ENCODE measurements at regions of chr3 and their contacts with region 1.

Region 1: DNA sequence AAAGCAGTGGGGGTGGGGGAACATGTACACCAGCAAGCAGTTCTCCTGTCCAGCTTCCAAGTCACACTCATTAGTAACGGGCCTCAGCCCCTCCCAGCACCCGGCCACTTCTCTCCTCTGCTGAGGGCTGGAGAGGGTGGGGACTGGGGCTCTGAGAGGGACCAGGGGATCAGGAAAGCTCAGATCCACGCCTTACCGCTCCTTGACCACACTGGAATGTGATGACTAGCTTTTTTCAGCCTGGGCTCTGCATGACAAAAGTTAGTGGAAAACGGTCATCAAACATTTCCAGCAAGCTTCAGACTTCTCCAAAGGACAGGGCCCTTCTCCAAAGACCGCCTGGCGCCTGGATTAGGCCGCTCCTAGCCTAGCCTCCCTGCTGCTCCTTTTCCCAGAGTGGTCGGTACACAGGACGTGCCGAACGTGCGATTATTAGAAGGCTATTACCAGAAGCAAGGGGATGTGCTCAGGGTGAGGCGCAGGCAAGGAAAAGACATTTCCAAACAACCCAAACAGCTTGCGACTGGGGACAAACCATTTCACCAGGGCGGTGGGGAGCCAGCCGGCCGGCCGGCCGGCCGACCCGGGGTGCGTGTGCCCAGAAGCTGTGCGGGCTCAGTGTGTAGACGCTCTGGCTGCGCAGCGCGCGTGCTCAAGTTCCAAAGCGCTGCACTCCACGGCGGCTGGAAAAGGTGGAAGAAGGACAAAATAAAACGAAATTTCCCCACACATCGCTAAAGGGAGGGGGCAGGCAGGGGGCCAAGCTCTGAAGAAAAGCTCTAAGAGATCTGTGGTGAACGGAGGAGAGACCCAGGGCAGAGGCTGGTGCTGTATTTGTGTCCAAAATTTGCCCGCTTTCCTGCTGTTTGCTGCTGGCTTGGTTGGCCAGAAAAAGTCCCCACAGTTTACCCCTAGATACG is 51.0 kb upstream of the SSR3 start:
- DNase-seq: no peak
- ATAC-seq: peak; percentile 51
- H3K4me3 ChIP-seq: peak overlapping the region; percentile 17
- H3K4me3 Mint-ChIP-seq: peak overlapping the region; percentile 18 to 88 (median 68)
- H3K27ac ChIP-seq: no peak overlapping the region
- H3K27ac Mint-ChIP-seq: peak overlapping the region in 1 of 9 donors; percentile 74
- H3K4me1 ChIP-seq: peaks cover 0 to 5% of the 10 kb centered on the region in 2 donors
- H3K4me1 Mint-ChIP-seq: peaks cover 5 to 45% (median 10%) of the 10 kb centered on the region in 7 donors
- H3K27me3 ChIP-seq: no peaks in the 10 kb centered on the region
- H3K27me3 Mint-ChIP-seq: peaks cover 25 to 32% (median 27%) of the 10 kb centered on the region in 5 donors

Region 2: DNA sequence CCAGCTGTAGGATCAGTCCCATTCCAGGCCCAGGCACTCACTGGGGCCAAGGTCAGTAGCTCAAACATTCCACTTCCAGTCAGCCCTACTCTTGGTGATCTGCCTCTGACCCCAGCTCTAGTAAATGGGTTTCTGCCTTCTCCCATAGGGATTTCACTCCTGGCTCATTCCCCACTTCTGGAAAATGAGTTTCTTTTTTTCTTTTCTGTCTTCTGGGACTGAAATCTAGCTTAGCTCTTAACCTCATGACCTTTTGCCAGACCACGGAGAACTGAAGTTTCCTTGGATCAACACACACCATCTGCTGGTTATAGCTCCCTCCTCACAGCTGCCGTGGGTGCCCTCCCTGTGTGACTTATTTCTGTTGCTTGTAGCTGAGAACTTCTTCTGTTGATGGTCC is 1504.5 kb before region 1 on chr3:
- CTCF ChIA-PET with region 1: no interaction called
- POLR2A ChIA-PET with region 1: no interaction called
- intact Hi-C with region 1: no loop called
- DNase-seq: no peak
- ATAC-seq: no peak
- H3K4me3 ChIP-seq: no peak overlapping the region
- H3K4me3 Mint-ChIP-seq: no peak overlapping the region
- H3K27ac ChIP-seq: no peak overlapping the region
- H3K27ac Mint-ChIP-seq: no peak overlapping the region
- H3K4me1 ChIP-seq: no peaks in the 10 kb centered on the region
- H3K4me1 Mint-ChIP-seq: no peaks in the 10 kb centered on the region
- H3K27me3 ChIP-seq: no peaks in the 10 kb centered on the region
- H3K27me3 Mint-ChIP-seq: no peaks in the 10 kb centered on the region

Region 3: GRCh38 chr3:156643729-156644389 is 37.9 kb after region 1 on chr3:
- CTCF ChIA-PET with region 1: no interaction called
- POLR2A ChIA-PET with region 1: no interaction called
- intact Hi-C with region 1: loop called in 1 of 2 experiments (anchors 5 kb)
- DNase-seq: peak in 8 of 9 donors; percentile 20 to 52 (median 38)
- ATAC-seq: peak; percentile 93
- H3K4me3 ChIP-seq: peak overlapping the region; percentile 17
- H3K4me3 Mint-ChIP-seq: peak overlapping the region; percentile 58 to 85 (median 70)
- H3K27ac ChIP-seq: no peak overlapping the region
- H3K27ac Mint-ChIP-seq: peak overlapping the region in 7 of 9 donors; percentile 3 to 92 (median 23)
- H3K4me1 ChIP-seq: peaks cover 5 to 13% of the 10 kb centered on the region in 2 donors
- H3K4me1 Mint-ChIP-seq: peaks cover 7 to 30% (median 16%) of the 10 kb centered on the region in 7 donors
- H3K27me3 ChIP-seq: no peaks in the 10 kb centered on the region
- H3K27me3 Mint-ChIP-seq: peaks cover 6 to 12% (median 7%) of the 10 kb centered on the region in 5 donors

Measured in naive thymus-derived CD4-positive, alpha-beta T cell (primary cell).